ENCODE measurements at regions of chr12 and their contacts with region 1.

Region 1: DNA sequence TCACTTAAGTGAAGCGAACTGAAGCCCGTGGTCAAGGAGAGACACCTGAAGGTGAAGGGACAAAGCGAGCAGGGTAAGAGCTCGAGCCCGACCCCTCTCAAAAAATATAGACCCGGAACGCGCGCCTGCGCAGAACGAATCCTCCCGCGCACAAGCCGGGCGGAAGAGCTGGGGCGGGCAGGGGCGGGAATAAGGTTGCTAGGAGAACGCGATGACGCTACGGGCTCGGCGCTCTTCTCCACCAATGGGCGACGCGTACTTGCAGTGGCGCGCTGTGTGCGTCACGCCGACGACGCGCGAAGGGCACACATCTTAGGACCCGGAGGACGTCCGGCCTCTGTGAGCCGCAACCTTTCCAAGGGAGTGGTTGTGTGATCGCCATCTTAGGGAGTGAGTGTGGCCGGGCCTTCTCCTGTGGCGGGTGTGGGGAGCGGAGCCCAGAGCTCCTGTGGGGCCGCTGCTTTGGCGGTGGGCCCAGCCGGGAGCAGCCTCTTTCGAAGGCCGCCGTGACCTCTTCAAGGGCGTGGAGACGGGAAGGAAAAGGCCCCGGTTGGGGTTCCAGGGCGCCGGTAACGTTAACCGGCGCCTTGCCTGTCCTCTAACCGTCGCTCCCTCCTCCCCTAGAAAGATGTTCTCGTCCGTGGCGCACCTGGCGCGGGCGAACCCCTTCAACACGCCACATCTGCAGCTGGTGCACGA is at the start of gene SLC25A3:
- H3K4me3 ChIP-seq: peak within 1 kb of the TSS; percentile 95
- H3K27ac ChIP-seq: peak within 1 kb of the TSS; percentile 94
- H3K4me1 ChIP-seq: peaks cover 6% of the 10 kb centered on the region
- CTCF ChIP-seq: no peak

Region 2: GRCh38 chr12:98408681-98409080 is 184.8 kb before region 1 on chr12:
- CTCF ChIA-PET with region 1: no interaction called
- POLR2A ChIA-PET with region 1: no interaction called
- H3K4me3 ChIP-seq: no peak overlapping the region
- H3K27ac ChIP-seq: no peak overlapping the region
- H3K4me1 ChIP-seq: no peaks in the 10 kb centered on the region
- CTCF ChIP-seq: no peak

Region 3: GRCh38 chr12:98544751-98545150 is 48.7 kb before region 1 on chr12:
- CTCF ChIA-PET with region 1: no interaction called
- POLR2A ChIA-PET with region 1: no interaction called
- H3K4me3 ChIP-seq: no peak overlapping the region
- H3K27ac ChIP-seq: no peak overlapping the region
- H3K4me1 ChIP-seq: no peaks in the 10 kb centered on the region
- CTCF ChIP-seq: no peak

Region 4: DNA sequence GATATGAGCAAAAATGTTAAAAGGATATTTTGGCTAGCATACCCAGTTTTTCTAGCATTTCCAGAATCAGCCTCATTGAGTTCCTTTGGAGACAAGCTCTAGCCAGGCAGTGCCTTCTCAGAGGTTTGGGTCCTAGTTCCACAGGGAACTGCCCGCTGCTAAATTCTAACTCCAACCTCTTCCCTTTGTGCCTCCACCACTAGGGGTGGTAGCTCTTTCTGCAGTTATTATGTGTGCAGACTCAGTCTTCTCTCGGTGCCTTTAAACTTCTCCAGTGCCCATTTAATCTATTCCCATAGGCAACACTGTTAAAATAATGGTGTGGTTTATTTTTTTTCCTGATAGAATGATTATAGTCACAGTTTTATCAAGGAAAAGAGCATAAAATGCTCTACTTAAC is 21.5 kb before region 1 on chr12:
- CTCF ChIA-PET with region 1: interaction called, 18 read pairs
- POLR2A ChIA-PET with region 1: interaction called, 9 read pairs
- H3K4me3 ChIP-seq: no peak overlapping the region
- H3K27ac ChIP-seq: no peak overlapping the region
- H3K4me1 ChIP-seq: no peaks in the 10 kb centered on the region
- CTCF ChIP-seq: no peak

Region 5: DNA sequence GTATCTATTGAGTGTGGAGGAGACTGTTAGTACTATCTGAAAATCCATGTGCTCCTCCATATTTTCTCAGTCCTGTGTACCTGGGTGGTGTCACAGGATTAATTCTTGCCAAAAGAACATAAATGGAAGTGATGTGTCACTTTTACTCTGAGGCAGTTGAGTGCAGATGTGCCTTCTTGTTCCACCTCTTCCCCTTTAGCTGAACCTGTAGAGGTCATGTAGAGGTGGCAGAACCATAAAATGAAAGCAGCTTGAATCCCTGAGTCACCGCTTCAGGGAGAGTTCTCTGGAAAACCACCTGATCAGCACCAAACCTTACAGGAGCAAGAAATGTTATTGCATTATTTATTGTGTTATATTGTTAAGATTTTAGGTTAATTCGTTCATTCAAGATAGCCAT is 14.7 kb before region 1 on chr12:
- CTCF ChIA-PET with region 1: interaction called, 3 read pairs
- POLR2A ChIA-PET with region 1: interaction called, 11 read pairs
- H3K4me3 ChIP-seq: no peak overlapping the region
- H3K27ac ChIP-seq: no peak overlapping the region
- H3K4me1 ChIP-seq: 0 out of 2 replicates have a peak, but pooled peaks cover 6% of the 10 kb centered on the region
- CTCF ChIP-seq: no peak

Region 6: GRCh38 chr12:98612696-98613334 is 19.3 kb after region 1 on chr12:
- CTCF ChIA-PET with region 1: interaction called, 3 read pairs
- POLR2A ChIA-PET with region 1: interaction called, 11 read pairs
- H3K4me3 ChIP-seq: no peak overlapping the region
- H3K27ac ChIP-seq: no peak overlapping the region
- H3K4me1 ChIP-seq: no peaks in the 10 kb centered on the region
- CTCF ChIP-seq: no peak

Region 7: DNA sequence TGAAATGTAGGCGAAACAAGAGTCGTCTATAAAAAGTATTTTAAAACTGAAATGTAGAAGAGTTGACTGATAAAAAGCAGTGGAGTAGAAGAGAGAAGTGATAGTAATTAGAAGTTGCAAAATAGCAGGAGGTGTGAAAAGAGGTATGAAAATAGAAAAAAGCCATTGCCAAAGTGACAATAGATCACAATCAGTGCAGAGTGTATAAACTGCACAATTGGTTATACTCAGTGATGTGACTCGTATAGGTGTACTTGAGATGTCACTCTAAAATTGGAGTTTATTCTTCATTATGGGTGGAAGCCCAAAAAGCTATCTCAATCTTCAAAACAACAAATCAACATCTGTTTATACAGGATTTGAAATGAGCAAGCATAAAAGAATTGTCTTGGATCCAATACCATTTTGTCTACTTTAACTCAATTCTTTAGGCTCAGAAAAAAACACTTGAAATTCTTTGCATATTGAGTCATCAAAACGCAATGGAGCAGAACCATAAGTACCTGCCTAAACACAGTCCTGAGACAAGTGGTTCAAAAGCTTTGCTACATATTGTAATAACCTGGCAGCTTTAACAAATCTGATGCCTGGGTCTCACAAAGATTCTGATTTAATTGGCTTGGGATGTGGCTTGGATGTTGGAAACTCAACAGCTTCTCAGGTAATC is 42.3 kb after region 1 on chr12:
- CTCF ChIA-PET with region 1: interaction called, 5 read pairs
- POLR2A ChIA-PET with region 1: interaction called, 26 read pairs
- H3K4me3 ChIP-seq: no peak overlapping the region
- H3K27ac ChIP-seq: no peak overlapping the region
- H3K4me1 ChIP-seq: peaks cover 7% of the 10 kb centered on the region; the same call in 1 of the 2 replicates
- CTCF ChIP-seq: no peak

Region 8: GRCh38 chr12:98644711-98645402 is 51.4 kb after region 1 on chr12 and contains the starts of genes APAF1 and IKBIP:
- CTCF ChIA-PET with region 1: interaction called, 5 read pairs
- POLR2A ChIA-PET with region 1: interaction called, 27 read pairs
- H3K4me3 ChIP-seq: peak within 1 kb of the TSS; percentile 96
- H3K27ac ChIP-seq: peak within 1 kb of the TSS; percentile 88
- H3K4me1 ChIP-seq: no peaks in the 10 kb centered on the region
- CTCF ChIP-seq: no peak

Measured in HEK293 (cell line).